PC-9 (cell line): ENCODE measurements at regions of chr9 and their contacts with region 1.

Region 1: DNA sequence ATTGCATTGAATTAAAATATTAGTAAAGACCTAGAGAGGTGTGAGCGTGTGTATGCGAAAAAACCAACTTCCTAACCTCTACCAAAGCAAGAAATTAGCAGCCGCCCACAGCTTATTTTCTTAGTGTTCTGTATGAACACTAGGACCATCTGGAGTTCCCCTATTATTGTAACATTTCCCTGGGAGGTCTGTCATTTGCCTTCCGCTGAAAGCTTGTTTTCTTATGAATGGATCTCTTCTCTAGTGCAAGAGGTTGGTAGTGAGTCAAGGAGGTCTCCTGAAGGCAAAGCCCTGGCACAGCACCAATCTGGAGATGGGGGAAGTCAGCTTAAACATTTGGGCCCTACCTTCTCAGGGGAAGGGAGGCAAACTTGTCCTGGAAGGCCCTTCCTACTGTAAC is 10.8 kb downstream of the TNFSF8 start:
- DNase-seq: no peak
- H3K4me3 ChIP-seq: no peak overlapping the region
- H3K27ac ChIP-seq: no peak overlapping the region
- H3K4me1 ChIP-seq: no peaks in the 10 kb centered on the region
- H3K27me3 ChIP-seq: peaks cover 38% of the 10 kb centered on the region
- CTCF ChIP-seq: no peak

Region 2: DNA sequence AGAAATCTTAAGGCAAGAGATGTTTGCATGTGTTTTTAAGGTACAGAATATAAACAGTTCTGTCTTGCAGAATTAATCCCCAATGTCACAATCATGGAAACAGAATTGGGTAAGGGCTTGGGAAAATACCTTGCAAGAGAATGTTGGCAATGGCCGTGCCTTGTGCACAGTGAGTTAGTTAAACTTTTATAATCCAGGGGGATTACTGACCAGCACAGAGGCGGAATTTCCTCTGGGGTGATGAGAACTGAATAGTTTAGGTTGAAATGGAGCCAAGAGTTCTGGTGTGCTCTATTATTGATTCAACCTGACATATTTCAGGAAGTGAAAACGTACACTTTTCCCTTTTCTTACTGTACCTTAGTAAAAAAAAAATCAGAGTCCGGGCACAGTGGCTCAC is 133.4 kb before region 1 on chr9:
- CTCF ChIA-PET with region 1: no interaction called
- POLR2A ChIA-PET with region 1: no interaction called
- intact Hi-C with region 1: no loop called
- DNase-seq: peak in 1 of 2 experiments; percentile 42
- H3K4me3 ChIP-seq: no peak overlapping the region
- H3K27ac ChIP-seq: no peak overlapping the region
- H3K4me1 ChIP-seq: no peaks in the 10 kb centered on the region
- H3K27me3 ChIP-seq: 0 out of 2 replicates have a peak, but pooled peaks cover 4% of the 10 kb centered on the region
- CTCF ChIP-seq: no peak

Region 3: GRCh38 chr9:114989600-114990410 is 70.2 kb after region 1 on chr9:
- CTCF ChIA-PET with region 1: no interaction called
- POLR2A ChIA-PET with region 1: no interaction called
- intact Hi-C with region 1: loop called (anchors 5 kb)
- DNase-seq: no peak
- H3K4me3 ChIP-seq: no peak overlapping the region
- H3K27ac ChIP-seq: no peak overlapping the region
- H3K4me1 ChIP-seq: peaks cover 15% of the 10 kb centered on the region
- H3K27me3 ChIP-seq: peaks cover 22% of the 10 kb centered on the region; the same call in 1 of the 2 replicates
- CTCF ChIP-seq: no peak